Caco-2 (cell line): ENCODE measurements at regions of chr2 and their contacts with region 1.

Region 1: GRCh38 chr2:203014456-203015199 is at the start of gene NBEAL1:
- DNase-seq: peak; percentile 98 to 99
- H3K4me3 ChIP-seq: peak within 1 kb of the TSS; percentile 99
- H3K4me3 Mint-ChIP-seq: peak within 1 kb of the TSS; percentile 97
- H3K27ac Mint-ChIP-seq: peak within 1 kb of the TSS; percentile 99
- H3K4me1 ChIP-seq: peaks cover 29% of the 10 kb centered on the region
- H3K4me1 Mint-ChIP-seq: peaks cover 26% of the 10 kb centered on the region
- H3K27me3 ChIP-seq: no peaks in the 10 kb centered on the region
- H3K27me3 Mint-ChIP-seq: no peaks in the 10 kb centered on the region
- CTCF ChIP-seq: no peak
- total RNA-seq, gene NBEAL1: 39.9 and 44.1 TPM in 2 replicates

Region 2: DNA sequence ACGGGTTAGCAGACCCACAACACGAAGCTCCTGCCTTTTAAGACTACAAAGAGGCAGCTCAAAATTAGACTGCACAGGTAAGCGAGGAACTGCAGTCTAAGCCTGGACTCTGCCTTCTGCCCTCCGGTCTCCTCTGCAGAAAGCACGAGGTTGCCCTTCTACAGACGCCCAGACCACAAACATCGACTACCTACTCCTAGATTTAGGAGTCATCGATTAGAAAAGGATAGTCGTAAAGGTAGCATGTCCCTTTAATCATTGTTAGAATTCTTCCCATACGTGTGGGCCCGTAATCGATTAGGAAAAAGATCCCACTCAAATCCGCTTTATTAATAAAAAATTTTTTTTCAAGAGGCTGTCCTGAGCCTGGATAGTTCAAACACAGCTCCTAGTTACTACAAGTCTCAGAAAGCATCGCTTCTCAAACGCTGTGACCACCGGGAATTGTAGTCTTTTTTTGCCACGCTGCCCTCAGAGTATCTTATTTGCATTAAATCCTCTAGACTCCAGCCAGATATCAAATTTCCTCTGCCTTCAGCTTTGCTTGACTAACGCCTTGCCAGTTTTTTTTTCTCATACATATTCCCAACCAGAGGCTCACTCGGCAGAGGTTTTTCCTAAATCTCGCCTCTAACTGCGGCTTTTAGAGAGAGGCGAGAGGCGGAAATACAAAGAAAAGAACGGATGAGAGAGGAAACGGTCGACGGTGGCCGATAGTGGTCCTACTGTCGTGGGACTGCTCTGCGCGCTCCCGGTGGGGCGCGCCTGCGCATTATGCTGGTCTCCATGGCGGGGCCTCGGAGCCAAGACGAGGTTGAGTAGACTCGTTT is 102.9 kb before region 1 on chr2 and contains the starts of genes CARF and WDR12:
- CTCF ChIA-PET with region 1: no interaction called
- POLR2A ChIA-PET with region 1: interaction called, 6 read pairs
- intact Hi-C with region 1: loop called (anchors 1 kb)
- DNase-seq: peak; percentile 93
- H3K4me3 ChIP-seq: peak within 1 kb of the TSS; percentile 55
- H3K4me3 Mint-ChIP-seq: peak within 1 kb of the TSS; percentile 97
- H3K27ac Mint-ChIP-seq: peak within 1 kb of the TSS; percentile 92
- H3K4me1 ChIP-seq: 0 out of 2 replicates have a peak, but pooled peaks cover 8% of the 10 kb centered on the region
- H3K4me1 Mint-ChIP-seq: peaks cover 12% of the 10 kb centered on the region
- H3K27me3 ChIP-seq: no peaks in the 10 kb centered on the region
- H3K27me3 Mint-ChIP-seq: no peaks in the 10 kb centered on the region
- CTCF ChIP-seq: no peak
- total RNA-seq, gene CARF: 4.3 and 4.9 TPM in 2 replicates
- total RNA-seq, gene WDR12: 117 and 118 TPM in 2 replicates

Region 3: GRCh38 chr2:202965810-202966460 is 48.7 kb before region 1 on chr2:
- CTCF ChIA-PET with region 1: no interaction called
- POLR2A ChIA-PET with region 1: no interaction called
- intact Hi-C with region 1: loop called (anchors 2 kb)
- DNase-seq: peak; percentile 13 to 42
- H3K4me3 ChIP-seq: no peak overlapping the region
- H3K4me3 Mint-ChIP-seq: no peak overlapping the region
- H3K27ac Mint-ChIP-seq: peak overlapping the region; percentile 42
- H3K4me1 ChIP-seq: no peaks in the 10 kb centered on the region; the same call in 1 of the 2 replicates
- H3K4me1 Mint-ChIP-seq: no peaks in the 10 kb centered on the region
- H3K27me3 ChIP-seq: no peaks in the 10 kb centered on the region
- H3K27me3 Mint-ChIP-seq: no peaks in the 10 kb centered on the region
- CTCF ChIP-seq: no peak

Region 4: GRCh38 chr2:202989749-202990148 is 24.9 kb before region 1 on chr2:
- CTCF ChIA-PET with region 1: no interaction called
- POLR2A ChIA-PET with region 1: no interaction called
- intact Hi-C with region 1: no loop called
- DNase-seq: no peak
- H3K4me3 ChIP-seq: no peak overlapping the region
- H3K4me3 Mint-ChIP-seq: no peak overlapping the region
- H3K27ac Mint-ChIP-seq: no peak overlapping the region
- H3K4me1 ChIP-seq: 0 out of 2 replicates have a peak, but pooled peaks cover 6% of the 10 kb centered on the region
- H3K4me1 Mint-ChIP-seq: no peaks in the 10 kb centered on the region
- H3K27me3 ChIP-seq: no peaks in the 10 kb centered on the region
- H3K27me3 Mint-ChIP-seq: no peaks in the 10 kb centered on the region
- CTCF ChIP-seq: no peak

Region 5: GRCh38 chr2:203002054-203002821 is 12.4 kb before region 1 on chr2:
- CTCF ChIA-PET with region 1: interaction called, 5 read pairs
- POLR2A ChIA-PET with region 1: interaction called, 12 read pairs
- intact Hi-C with region 1: loop called (anchors 1 kb)
- DNase-seq: peak; percentile 70 to 76
- H3K4me3 ChIP-seq: no peak overlapping the region
- H3K4me3 Mint-ChIP-seq: peak overlapping the region; percentile 35
- H3K27ac Mint-ChIP-seq: peak overlapping the region; percentile 79
- H3K4me1 ChIP-seq: peaks cover 28% of the 10 kb centered on the region
- H3K4me1 Mint-ChIP-seq: peaks cover 16% of the 10 kb centered on the region
- H3K27me3 ChIP-seq: no peaks in the 10 kb centered on the region
- H3K27me3 Mint-ChIP-seq: no peaks in the 10 kb centered on the region
- CTCF ChIP-seq: no peak

Region 6: DNA sequence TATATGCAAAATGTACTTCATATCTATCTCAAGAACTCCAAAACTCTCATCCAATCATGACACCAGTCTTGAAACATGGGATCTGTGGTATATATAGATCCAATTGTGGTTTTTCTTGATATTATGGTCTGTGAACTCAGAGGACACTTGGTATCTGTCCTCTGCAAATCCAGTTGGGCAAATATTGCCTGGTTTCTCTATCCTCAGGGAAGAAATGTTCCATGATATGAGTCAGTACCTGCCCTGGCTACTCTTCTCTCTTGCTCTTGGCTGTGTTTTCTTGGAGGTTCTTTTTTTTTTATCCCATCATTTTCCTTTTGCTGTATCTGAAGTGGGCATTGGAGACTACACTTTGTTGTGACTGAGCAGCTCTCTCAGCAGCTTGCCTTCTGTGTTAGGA is 11.0 kb after region 1 on chr2:
- CTCF ChIA-PET with region 1: no interaction called
- POLR2A ChIA-PET with region 1: no interaction called
- intact Hi-C with region 1: no loop called
- DNase-seq: no peak
- H3K4me3 ChIP-seq: no peak overlapping the region
- H3K4me3 Mint-ChIP-seq: no peak overlapping the region
- H3K27ac Mint-ChIP-seq: no peak overlapping the region
- H3K4me1 ChIP-seq: no peaks in the 10 kb centered on the region
- H3K4me1 Mint-ChIP-seq: peaks cover 13% of the 10 kb centered on the region
- H3K27me3 ChIP-seq: no peaks in the 10 kb centered on the region
- H3K27me3 Mint-ChIP-seq: no peaks in the 10 kb centered on the region
- CTCF ChIP-seq: no peak

Region 7: GRCh38 chr2:203040966-203041521 is 26.4 kb after region 1 on chr2:
- CTCF ChIA-PET with region 1: no interaction called
- POLR2A ChIA-PET with region 1: no interaction called
- intact Hi-C with region 1: loop called (anchors 2 kb)
- DNase-seq: peak in 1 of 2 experiments; percentile 38
- H3K4me3 ChIP-seq: no peak overlapping the region
- H3K4me3 Mint-ChIP-seq: peak overlapping the region; percentile 48
- H3K27ac Mint-ChIP-seq: peak overlapping the region; percentile 70
- H3K4me1 ChIP-seq: peaks cover 28% of the 10 kb centered on the region
- H3K4me1 Mint-ChIP-seq: peaks cover 35% of the 10 kb centered on the region
- H3K27me3 ChIP-seq: no peaks in the 10 kb centered on the region
- H3K27me3 Mint-ChIP-seq: no peaks in the 10 kb centered on the region
- CTCF ChIP-seq: no peak

Region 8: GRCh38 chr2:203061346-203061745 is 46.7 kb after region 1 on chr2:
- CTCF ChIA-PET with region 1: no interaction called
- POLR2A ChIA-PET with region 1: interaction called, 5 read pairs
- intact Hi-C with region 1: loop called (anchors 2 kb)
- DNase-seq: peak in 1 of 2 experiments; percentile 67
- H3K4me3 ChIP-seq: no peak overlapping the region
- H3K4me3 Mint-ChIP-seq: peak overlapping the region; percentile 66
- H3K27ac Mint-ChIP-seq: peak overlapping the region; percentile 94
- H3K4me1 ChIP-seq: peaks cover 28% of the 10 kb centered on the region
- H3K4me1 Mint-ChIP-seq: peaks cover 27% of the 10 kb centered on the region
- H3K27me3 ChIP-seq: no peaks in the 10 kb centered on the region
- H3K27me3 Mint-ChIP-seq: no peaks in the 10 kb centered on the region
- CTCF ChIP-seq: no peak

Region 9: GRCh38 chr2:203500951-203501350 is 486.3 kb after region 1 on chr2:
- CTCF ChIA-PET with region 1: no interaction called
- POLR2A ChIA-PET with region 1: no interaction called
- intact Hi-C with region 1: no loop called
- DNase-seq: no peak
- H3K4me3 ChIP-seq: no peak overlapping the region
- H3K4me3 Mint-ChIP-seq: no peak overlapping the region
- H3K27ac Mint-ChIP-seq: peak overlapping the region; percentile 11
- H3K4me1 ChIP-seq: peaks cover 26% of the 10 kb centered on the region
- H3K4me1 Mint-ChIP-seq: peaks cover 21% of the 10 kb centered on the region
- H3K27me3 ChIP-seq: no peaks in the 10 kb centered on the region
- H3K27me3 Mint-ChIP-seq: no peaks in the 10 kb centered on the region
- CTCF ChIP-seq: no peak

Region 10: DNA sequence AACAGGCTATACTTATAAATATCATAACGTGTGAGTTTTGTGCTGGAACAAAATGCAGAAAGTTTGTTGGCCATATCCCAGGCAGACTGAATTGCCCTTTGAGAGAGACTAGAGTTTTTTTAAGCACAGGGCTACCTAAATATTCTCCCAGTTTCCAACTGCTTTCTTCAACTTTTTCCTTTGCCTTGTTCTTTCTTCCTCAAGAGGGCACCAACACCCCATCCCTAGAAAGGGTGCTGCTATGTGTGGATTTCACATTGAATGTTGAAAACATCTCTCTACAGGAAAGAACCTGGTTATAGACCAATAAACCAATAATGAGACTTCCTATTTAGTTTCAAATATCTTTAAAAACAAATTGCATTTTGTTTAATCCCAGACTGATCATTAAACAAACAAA is 1009.9 kb after region 1 on chr2:
- CTCF ChIA-PET with region 1: no interaction called
- POLR2A ChIA-PET with region 1: no interaction called
- intact Hi-C with region 1: no loop called
- DNase-seq: peak; percentile 42 to 70
- H3K4me3 ChIP-seq: no peak overlapping the region
- H3K4me3 Mint-ChIP-seq: no peak overlapping the region
- H3K27ac Mint-ChIP-seq: no peak overlapping the region
- H3K4me1 ChIP-seq: no peaks in the 10 kb centered on the region
- H3K4me1 Mint-ChIP-seq: no peaks in the 10 kb centered on the region
- H3K27me3 ChIP-seq: no peaks in the 10 kb centered on the region
- H3K27me3 Mint-ChIP-seq: no peaks in the 10 kb centered on the region
- CTCF ChIP-seq: peak; percentile 65 to 75